ENCODE measurements at regions of chr7 and their contacts with region 1.

Region 1: DNA sequence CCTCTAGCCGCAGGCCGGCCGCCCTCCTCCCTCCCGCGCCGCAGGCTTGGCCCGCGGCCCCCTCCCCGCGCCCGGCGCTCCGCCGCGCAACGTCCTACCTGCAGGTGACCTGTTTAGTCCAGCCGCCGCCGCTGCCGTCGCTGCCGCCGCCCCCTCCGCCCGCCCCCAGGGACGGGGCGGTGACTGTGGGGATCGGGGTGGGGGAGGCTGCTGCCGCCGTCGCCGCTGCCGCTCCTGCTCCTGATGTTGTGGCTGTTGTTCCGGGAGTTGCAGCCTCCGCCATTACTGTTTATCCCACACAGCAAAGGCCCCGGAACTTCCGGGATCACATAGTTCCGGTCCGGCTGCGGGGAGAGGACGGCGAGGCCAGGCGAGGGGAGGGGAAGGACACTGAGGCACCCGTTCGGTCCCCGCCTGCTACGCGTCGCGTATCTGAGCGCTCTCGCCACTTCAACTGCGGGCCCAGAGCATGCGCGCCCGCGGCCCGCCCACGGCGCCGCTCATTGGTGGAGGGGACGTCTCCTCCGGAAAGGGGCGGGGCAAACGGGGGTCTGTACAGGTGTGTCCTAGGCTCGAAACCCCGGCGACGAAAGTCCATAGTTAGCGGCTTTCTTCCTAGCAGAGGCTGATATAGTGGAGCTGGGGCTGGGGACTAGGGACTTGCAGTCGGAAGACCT is at the start of gene MKRN1:
- DNase-seq: peak; percentile 95
- H3K4me3 ChIP-seq: peak within 1 kb of the TSS; percentile 60 to 93 (median 90)
- H3K27ac ChIP-seq: peak within 1 kb of the TSS; percentile 74
- H3K4me1 ChIP-seq: peaks cover 6% of the 10 kb centered on the region
- H3K27me3 ChIP-seq: no peaks in the 10 kb centered on the region
- CTCF ChIP-seq: no peak
- total RNA-seq, gene MKRN1: 48.2 to 69.6 TPM

Region 2: GRCh38 chr7:139680676-139681462 is 798.3 kb before region 1 on chr7:
- CTCF ChIA-PET with region 1: no interaction called
- dilution Hi-C with region 1: no loop called
- in situ Hi-C with region 1: no loop called
- intact Hi-C with region 1: loop called (anchors 5 kb)
- DNase-seq: peak; percentile 97
- H3K4me3 ChIP-seq: no peak overlapping the region
- H3K27ac ChIP-seq: peak overlapping the region; percentile 97
- H3K4me1 ChIP-seq: peaks cover 49% of the 10 kb centered on the region
- H3K27me3 ChIP-seq: no peaks in the 10 kb centered on the region
- CTCF ChIP-seq: no peak

Region 3: GRCh38 chr7:139714163-139714901 is 764.9 kb before region 1 on chr7:
- CTCF ChIA-PET with region 1: no interaction called
- dilution Hi-C with region 1: no loop called
- in situ Hi-C with region 1: no loop called
- intact Hi-C with region 1: no loop called
- DNase-seq: no peak
- H3K4me3 ChIP-seq: no peak overlapping the region
- H3K27ac ChIP-seq: no peak overlapping the region
- H3K4me1 ChIP-seq: no peaks in the 10 kb centered on the region
- H3K27me3 ChIP-seq: no peaks in the 10 kb centered on the region
- CTCF ChIP-seq: no peak

Region 4: DNA sequence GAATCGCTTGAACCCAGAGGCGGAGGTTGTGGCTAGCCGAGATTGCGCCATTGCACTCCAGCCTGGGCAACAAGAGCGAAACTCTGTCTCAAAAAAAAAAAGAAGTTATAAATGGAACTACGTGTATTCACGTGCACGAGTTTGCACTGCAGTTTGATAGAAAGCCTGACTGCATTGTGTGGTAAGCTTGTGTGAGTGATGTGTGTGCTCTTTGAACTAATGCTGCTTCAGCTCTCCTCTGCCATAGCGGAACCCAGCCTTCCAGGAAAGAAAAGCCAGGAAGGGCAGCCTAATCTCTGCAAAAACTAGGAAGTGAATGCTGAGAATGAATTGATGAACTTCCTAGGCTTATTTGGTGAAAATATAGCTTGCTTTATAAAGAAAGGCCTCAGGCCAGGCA is 15.7 kb after region 1 on chr7:
- CTCF ChIA-PET with region 1: interaction called, 4 read pairs
- dilution Hi-C with region 1: no loop called
- in situ Hi-C with region 1: no loop called
- intact Hi-C with region 1: loop called (anchors 1 kb)
- DNase-seq: no peak
- H3K4me3 ChIP-seq: no peak overlapping the region
- H3K27ac ChIP-seq: no peak overlapping the region
- H3K4me1 ChIP-seq: no peaks in the 10 kb centered on the region
- H3K27me3 ChIP-seq: no peaks in the 10 kb centered on the region
- CTCF ChIP-seq: no peak

Region 5: DNA sequence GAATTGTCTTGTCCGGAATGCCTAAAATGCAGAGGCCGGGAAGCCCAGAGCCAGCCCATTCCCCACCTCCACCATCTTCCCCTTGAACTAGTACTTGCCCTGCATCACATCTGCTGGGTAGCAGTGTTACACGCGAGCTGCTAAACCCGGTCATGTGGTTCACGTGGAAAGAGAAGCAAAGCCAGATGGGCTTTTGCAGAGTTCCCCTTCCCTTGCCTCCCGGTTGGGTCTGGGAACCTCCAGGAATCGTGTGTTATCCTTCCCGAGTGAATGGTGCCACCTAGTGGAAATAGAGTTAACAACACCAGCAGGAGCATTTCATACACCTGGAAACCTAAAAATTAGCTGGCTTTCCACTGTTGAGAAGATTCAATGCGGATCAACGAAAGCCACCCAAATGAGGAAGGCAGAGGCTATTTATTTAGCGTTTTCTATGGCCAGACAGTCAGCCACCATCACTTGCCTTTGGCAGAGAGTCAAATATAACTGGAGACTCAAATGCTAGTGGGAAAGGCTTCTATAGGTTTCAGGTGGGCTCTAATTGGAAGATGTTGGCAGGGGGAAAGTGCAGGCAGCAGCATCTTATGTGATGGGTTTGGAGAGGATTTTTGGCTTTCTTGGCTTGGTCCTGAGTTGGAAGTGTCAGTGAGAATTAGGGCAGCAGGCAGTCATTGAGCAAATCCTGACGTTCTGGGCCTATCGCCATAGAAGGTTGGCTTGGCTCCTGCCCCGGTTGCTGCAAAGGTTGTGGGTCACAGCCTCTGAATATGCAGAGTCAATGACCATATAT is 174.3 kb after region 1 on chr7:
- CTCF ChIA-PET with region 1: no interaction called
- dilution Hi-C with region 1: no loop called
- in situ Hi-C with region 1: no loop called
- intact Hi-C with region 1: loop called (anchors 1 kb)
- DNase-seq: peak; percentile 57
- H3K4me3 ChIP-seq: no peak overlapping the region
- H3K27ac ChIP-seq: no peak overlapping the region
- H3K4me1 ChIP-seq: peaks cover 16% of the 10 kb centered on the region
- H3K27me3 ChIP-seq: no peaks in the 10 kb centered on the region
- CTCF ChIP-seq: peak; percentile 86 to 91

Region 6: DNA sequence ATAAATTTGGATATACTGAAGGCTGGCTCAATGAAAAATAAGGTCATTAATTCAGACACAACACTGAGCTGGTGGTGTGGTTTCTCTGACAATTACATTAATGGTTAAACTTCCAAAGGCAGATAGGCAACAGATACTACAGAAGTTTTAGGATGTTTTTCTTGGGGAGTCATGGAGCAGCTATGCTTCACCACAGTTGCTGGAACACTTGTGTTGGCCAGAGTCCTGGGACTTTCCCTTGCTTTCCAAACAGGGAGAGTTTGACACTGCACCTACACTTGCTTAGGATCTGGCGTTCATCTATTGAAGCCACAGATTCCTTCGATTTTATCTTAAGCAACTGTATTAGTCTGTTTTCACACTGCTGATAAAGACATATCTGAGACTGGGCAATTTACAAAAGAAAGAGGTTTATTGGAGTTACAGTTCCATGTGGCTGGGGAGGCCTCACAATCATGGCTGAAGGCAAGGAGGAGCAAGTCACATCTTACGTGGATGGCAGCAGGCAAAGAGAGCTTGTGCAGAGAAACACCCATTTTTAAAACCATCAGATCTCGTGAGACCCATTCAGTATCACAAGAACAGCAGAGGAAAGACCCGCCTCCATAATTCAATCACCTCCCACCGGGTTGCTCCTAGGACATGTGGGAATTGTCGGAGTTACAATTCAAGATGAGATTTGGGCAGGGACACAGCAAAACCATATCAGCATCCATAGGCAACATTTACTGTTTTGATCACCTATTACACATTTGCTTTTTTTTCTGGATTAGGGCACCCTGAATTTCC is 566.8 kb after region 1 on chr7:
- CTCF ChIA-PET with region 1: interaction called, 21 read pairs
- dilution Hi-C with region 1: no loop called
- in situ Hi-C with region 1: no loop called
- intact Hi-C with region 1: no loop called
- DNase-seq: peak; percentile 40
- H3K4me3 ChIP-seq: no peak overlapping the region
- H3K27ac ChIP-seq: no peak overlapping the region
- H3K4me1 ChIP-seq: no peaks in the 10 kb centered on the region
- H3K27me3 ChIP-seq: no peaks in the 10 kb centered on the region
- CTCF ChIP-seq: no peak